HepG2 (cell line): ENCODE measurements at regions of chr12 and their contacts with region 1.

Region 1: GRCh38 chr12:79935021-79935623 is at the start of gene PPP1R12A:
- DNase-seq: peak; percentile 93
- ATAC-seq: peak; percentile 96
- H3K4me3 ChIP-seq: peak within 1 kb of the TSS; percentile 74 to 100 (median 98)
- H3K27ac ChIP-seq: peak within 1 kb of the TSS; percentile 95
- H3K4me1 ChIP-seq: peaks cover 28% of the 10 kb centered on the region
- H3K27me3 ChIP-seq: no peaks in the 10 kb centered on the region; a peak in 1 of 5 replicates
- CTCF ChIP-seq: peak; percentile 34; the same call in 1 of the 2 replicates
- EP300 ChIP-seq: no peak
- POLR2A ChIP-seq: peak; percentile 87 to 90
- RAD21 ChIP-seq: 0 out of 2 replicates have a peak, but pooled peaks have one; percentile 53
- total RNA-seq, gene PPP1R12A: 38.1 and 50.0 TPM in 2 replicates

Region 2: DNA sequence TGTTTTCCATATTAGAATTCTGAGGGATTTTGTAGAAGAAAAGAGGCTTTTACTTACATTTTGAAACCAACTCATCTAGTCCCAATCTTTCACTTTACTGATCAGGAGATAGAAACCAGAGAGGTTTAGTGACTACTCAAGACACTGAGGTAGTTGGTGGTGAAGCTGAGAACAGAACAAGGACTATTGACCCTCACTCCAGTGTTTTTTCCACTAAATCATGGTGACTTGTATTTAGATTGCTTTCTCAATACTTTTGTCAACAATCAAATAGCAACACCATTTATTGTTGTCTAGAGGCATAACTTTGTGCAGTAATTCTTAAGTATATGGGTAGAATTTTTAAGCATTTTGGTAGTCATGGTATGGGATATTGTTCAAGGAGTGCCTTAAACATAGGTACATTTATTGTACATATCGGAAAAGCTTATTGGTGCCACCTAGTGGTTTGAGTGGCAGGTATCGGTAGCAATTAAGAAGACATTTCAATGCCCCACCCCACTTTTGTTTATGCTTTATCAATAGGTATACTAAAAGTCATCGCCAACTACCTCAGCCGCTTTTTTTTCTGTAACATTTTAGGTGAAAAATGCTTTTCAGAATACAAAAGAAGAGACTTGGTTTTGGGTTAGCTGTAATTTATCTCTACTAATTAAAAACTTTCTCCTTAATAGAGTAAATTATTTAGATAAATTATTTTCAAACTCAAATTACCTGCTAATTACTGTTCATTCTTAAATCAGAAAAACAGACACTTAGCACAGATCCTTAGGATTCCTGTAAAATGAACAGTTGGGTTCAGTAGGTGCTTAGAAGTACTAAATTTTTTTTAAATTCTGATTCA is 197.0 kb before region 1 on chr12:
- CTCF ChIA-PET with region 1: no interaction called
- POLR2A ChIA-PET with region 1: no interaction called
- in situ Hi-C with region 1: no loop called
- intact Hi-C with region 1: no loop called
- DNase-seq: peak; percentile 68
- ATAC-seq: peak; percentile 84
- H3K4me3 ChIP-seq: no peak overlapping the region
- H3K27ac ChIP-seq: no peak overlapping the region
- H3K4me1 ChIP-seq: peaks cover 6% of the 10 kb centered on the region
- H3K27me3 ChIP-seq: no peaks in the 10 kb centered on the region
- CTCF ChIP-seq: peak; percentile 77
- EP300 ChIP-seq: no peak
- POLR2A ChIP-seq: no peak
- RAD21 ChIP-seq: peak; percentile 46; the same call in 1 of the 2 replicates

Region 3: DNA sequence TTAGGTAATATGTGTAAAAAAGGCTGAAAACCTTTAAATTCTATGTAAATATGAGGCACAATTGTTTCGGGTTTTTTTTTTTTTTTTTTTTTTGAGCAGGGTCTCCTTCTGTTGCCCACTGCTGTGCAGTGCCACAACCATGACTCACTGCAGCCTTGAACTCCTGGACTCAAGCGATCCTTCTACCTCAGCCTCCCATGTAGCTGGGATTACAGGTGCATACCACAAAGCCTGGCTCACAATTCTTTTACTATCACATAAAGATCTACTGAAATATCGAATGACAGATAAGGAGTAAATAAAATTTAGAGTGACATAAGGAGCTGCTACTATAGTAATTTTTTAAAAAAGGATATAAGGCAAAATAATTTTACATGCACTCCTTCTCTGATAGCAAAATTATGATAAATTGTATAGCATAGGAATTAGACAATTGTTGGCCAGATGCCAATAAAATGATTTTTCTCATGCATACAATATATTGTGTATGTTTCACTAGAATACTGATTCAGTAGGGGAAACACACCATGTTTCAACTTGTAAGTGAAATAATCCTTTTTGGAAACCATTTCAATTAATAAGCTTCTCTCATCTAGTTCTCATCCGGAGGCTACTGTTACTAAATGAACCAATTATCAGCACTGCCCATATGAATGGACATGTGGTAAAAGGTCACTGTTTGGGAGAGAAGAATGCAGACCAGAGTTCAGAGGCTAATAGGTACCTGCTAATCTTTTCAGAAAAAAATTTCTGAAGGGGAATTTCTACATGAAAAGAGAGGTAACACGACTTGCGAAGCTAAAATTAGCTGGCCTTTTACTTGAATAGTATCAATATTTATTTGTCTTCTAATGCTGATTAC is 108.6 kb before region 1 on chr12:
- CTCF ChIA-PET with region 1: no interaction called
- POLR2A ChIA-PET with region 1: no interaction called
- in situ Hi-C with region 1: no loop called
- intact Hi-C with region 1: loop called (anchors 10 kb)
- DNase-seq: peak; percentile 77
- ATAC-seq: peak; percentile 88
- H3K4me3 ChIP-seq: no peak overlapping the region
- H3K27ac ChIP-seq: peak overlapping the region; percentile 14
- H3K4me1 ChIP-seq: peaks cover 14% of the 10 kb centered on the region
- H3K27me3 ChIP-seq: no peaks in the 10 kb centered on the region
- CTCF ChIP-seq: no peak
- EP300 ChIP-seq: peak in 1 of 2 experiments; percentile 24; a peak in 1 of 4 replicates
- POLR2A ChIP-seq: no peak
- RAD21 ChIP-seq: no peak

Region 4: GRCh38 chr12:79908366-79908765 is 26.8 kb before region 1 on chr12:
- CTCF ChIA-PET with region 1: no interaction called
- POLR2A ChIA-PET with region 1: no interaction called
- in situ Hi-C with region 1: no loop called
- intact Hi-C with region 1: no loop called
- DNase-seq: no peak
- ATAC-seq: no peak
- H3K4me3 ChIP-seq: no peak overlapping the region
- H3K27ac ChIP-seq: no peak overlapping the region
- H3K4me1 ChIP-seq: peaks cover 17% of the 10 kb centered on the region
- H3K27me3 ChIP-seq: no peaks in the 10 kb centered on the region
- CTCF ChIP-seq: no peak
- EP300 ChIP-seq: no peak
- POLR2A ChIP-seq: no peak
- RAD21 ChIP-seq: no peak

Region 5: GRCh38 chr12:79919762-79920161 is 15.4 kb before region 1 on chr12:
- CTCF ChIA-PET with region 1: no interaction called
- POLR2A ChIA-PET with region 1: interaction called, 3 read pairs
- in situ Hi-C with region 1: no loop called
- intact Hi-C with region 1: loop called (anchors 2 kb)
- DNase-seq: no peak
- ATAC-seq: no peak
- H3K4me3 ChIP-seq: no peak overlapping the region
- H3K27ac ChIP-seq: no peak overlapping the region
- H3K4me1 ChIP-seq: peaks cover 7% of the 10 kb centered on the region; the same call in 1 of the 2 replicates
- H3K27me3 ChIP-seq: no peaks in the 10 kb centered on the region
- CTCF ChIP-seq: no peak
- EP300 ChIP-seq: no peak
- POLR2A ChIP-seq: no peak
- RAD21 ChIP-seq: no peak

Region 6: GRCh38 chr12:80186727-80187217 is 251.7 kb after region 1 on chr12:
- CTCF ChIA-PET with region 1: no interaction called
- POLR2A ChIA-PET with region 1: no interaction called
- in situ Hi-C with region 1: no loop called
- intact Hi-C with region 1: loop called (anchors 1 kb)
- DNase-seq: peak; percentile 82
- ATAC-seq: peak; percentile 95
- H3K4me3 ChIP-seq: no peak overlapping the region
- H3K27ac ChIP-seq: no peak overlapping the region
- H3K4me1 ChIP-seq: peaks cover 4% of the 10 kb centered on the region; the same call in 1 of the 2 replicates
- H3K27me3 ChIP-seq: no peaks in the 10 kb centered on the region
- CTCF ChIP-seq: peak; percentile 85
- EP300 ChIP-seq: no peak
- POLR2A ChIP-seq: no peak
- RAD21 ChIP-seq: peak; percentile 61; the same call in 1 of the 2 replicates